Activated CD4-positive, alpha-beta T cell treated with anti-CD3 and anti-CD28 coated beads, Interleukin-2, amount 10 ng/mL, durations not matched to agents 24 days and 14 days (primary cell): ENCODE measurements at regions of chr16 and their contacts with region 1.

Region 1: GRCh38 chr16:68528686-68529379 is 10.3 kb upstream of the ZFP90 start:
- DNase-seq: peak; percentile 96
- H3K4me3 Mint-ChIP-seq: peak overlapping the region; percentile 89
- H3K27ac Mint-ChIP-seq: peak overlapping the region; percentile 51
- H3K4me1 Mint-ChIP-seq: peaks cover 23% of the 10 kb centered on the region
- H3K27me3 Mint-ChIP-seq: no peaks in the 10 kb centered on the region

Region 2: GRCh38 chr16:68538880-68539701 is 10.3 kb after region 1 on chr16 and contains the start of gene ZFP90:
- intact Hi-C with region 1: loop called (anchors 1 kb)
- DNase-seq: peak; percentile 96
- H3K4me3 Mint-ChIP-seq: peak within 1 kb of the TSS; percentile 99
- H3K27ac Mint-ChIP-seq: peak within 1 kb of the TSS; percentile 99
- H3K4me1 Mint-ChIP-seq: peaks cover 17% of the 10 kb centered on the region
- H3K27me3 Mint-ChIP-seq: no peaks in the 10 kb centered on the region
- total RNA-seq, gene ZFP90: 19.0 and 20.2 TPM in 2 replicates

Region 3: GRCh38 chr16:68590201-68590994 is 61.6 kb after region 1 on chr16:
- intact Hi-C with region 1: loop called (anchors 5 kb)
- DNase-seq: peak; percentile 84
- H3K4me3 Mint-ChIP-seq: peak overlapping the region; percentile 44
- H3K27ac Mint-ChIP-seq: no peak overlapping the region
- H3K4me1 Mint-ChIP-seq: peaks cover 2% of the 10 kb centered on the region
- H3K27me3 Mint-ChIP-seq: no peaks in the 10 kb centered on the region

Region 4: GRCh38 chr16:68704232-68704867 is 175.5 kb after region 1 on chr16:
- intact Hi-C with region 1: loop called (anchors 2 kb)
- DNase-seq: peak; percentile 87
- H3K4me3 Mint-ChIP-seq: no peak overlapping the region
- H3K27ac Mint-ChIP-seq: no peak overlapping the region
- H3K4me1 Mint-ChIP-seq: peaks cover 2% of the 10 kb centered on the region
- H3K27me3 Mint-ChIP-seq: no peaks in the 10 kb centered on the region

Region 5: DNA sequence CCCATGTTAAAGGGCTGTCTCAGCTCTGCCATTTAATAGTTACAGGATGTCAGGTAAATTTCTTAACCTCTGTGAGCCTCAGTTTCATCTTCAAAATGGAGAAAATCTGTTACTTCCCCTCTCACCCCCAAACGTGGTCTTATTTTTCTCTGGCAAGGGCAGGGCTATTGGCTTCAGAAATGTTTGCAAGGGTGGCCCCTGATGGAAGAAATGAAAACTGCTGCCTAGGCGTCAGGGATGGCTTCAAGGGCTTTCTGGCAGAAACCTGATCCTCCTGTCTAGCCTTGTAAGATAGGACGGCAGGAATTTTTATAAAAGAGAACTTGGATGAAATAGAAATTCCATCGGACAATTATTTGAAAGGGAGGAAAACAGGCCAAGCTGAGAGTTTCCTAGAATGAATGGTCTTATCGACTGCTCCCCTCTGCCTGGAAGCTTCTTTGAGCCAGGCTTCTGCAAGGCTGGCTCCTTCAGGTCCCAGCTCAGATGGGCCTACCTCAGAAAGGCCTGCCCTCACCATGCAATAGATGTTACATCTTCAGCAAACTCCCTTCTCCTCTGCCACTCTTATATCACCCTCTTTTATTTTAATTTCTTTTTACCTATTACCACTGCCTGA is 271.5 kb after region 1 on chr16:
- intact Hi-C with region 1: loop called (anchors 1 kb)
- DNase-seq: peak; percentile 87
- H3K4me3 Mint-ChIP-seq: no peak overlapping the region
- H3K27ac Mint-ChIP-seq: no peak overlapping the region
- H3K4me1 Mint-ChIP-seq: no peaks in the 10 kb centered on the region
- H3K27me3 Mint-ChIP-seq: peaks cover 1% of the 10 kb centered on the region

Region 6: GRCh38 chr16:68843482-68844210 is 314.8 kb after region 1 on chr16 and contains the start of gene TANGO6:
- intact Hi-C with region 1: loop called (anchors 1 kb)
- DNase-seq: peak; percentile 97
- H3K4me3 Mint-ChIP-seq: peak within 1 kb of the TSS; percentile 87
- H3K27ac Mint-ChIP-seq: peak within 1 kb of the TSS; percentile 95
- H3K4me1 Mint-ChIP-seq: peaks cover 20% of the 10 kb centered on the region
- H3K27me3 Mint-ChIP-seq: no peaks in the 10 kb centered on the region
- total RNA-seq, gene TANGO6: 35.6 and 40.0 TPM in 2 replicates

Region 7: DNA sequence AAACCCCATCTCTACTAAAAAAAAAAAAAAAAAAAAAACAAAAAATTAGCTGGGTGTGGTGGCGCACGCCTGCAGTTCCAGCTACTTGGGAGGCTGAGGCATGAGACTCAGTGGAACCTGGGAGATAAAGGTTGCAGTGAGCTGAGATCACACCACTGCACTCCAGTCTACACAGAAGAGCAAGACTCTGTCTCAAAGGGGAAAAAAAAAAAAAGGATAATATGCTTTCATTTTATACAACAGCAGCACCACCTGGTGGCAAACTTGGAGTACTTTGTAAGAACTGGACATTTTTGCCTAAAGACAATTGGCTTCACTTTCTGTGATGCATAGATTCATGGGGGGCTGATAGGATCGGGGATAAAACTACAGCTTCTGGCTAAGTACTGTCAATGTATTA is 595.1 kb after region 1 on chr16:
- intact Hi-C with region 1: loop called (anchors 1 kb)
- DNase-seq: peak; percentile 90
- H3K4me3 Mint-ChIP-seq: no peak overlapping the region
- H3K27ac Mint-ChIP-seq: no peak overlapping the region
- H3K4me1 Mint-ChIP-seq: peaks cover 11% of the 10 kb centered on the region
- H3K27me3 Mint-ChIP-seq: no peaks in the 10 kb centered on the region